Endothelial cell of umbilical vein (primary cell): ENCODE measurements at regions of chr13 and their contacts with region 1.

Region 1: GRCh38 chr13:89695343-89696257 is 1651.9 kb upstream of the MIR17HG start:
- DNase-seq: peak; percentile 68
- H3K4me3 ChIP-seq: no peak overlapping the region
- H3K27ac ChIP-seq: no peak overlapping the region
- H3K4me1 ChIP-seq: peaks cover 4% of the 10 kb centered on the region
- H3K27me3 ChIP-seq: no peaks in the 10 kb centered on the region
- CTCF ChIP-seq: peak; percentile 67 to 70
- POLR2A ChIP-seq: no peak

Region 2: DNA sequence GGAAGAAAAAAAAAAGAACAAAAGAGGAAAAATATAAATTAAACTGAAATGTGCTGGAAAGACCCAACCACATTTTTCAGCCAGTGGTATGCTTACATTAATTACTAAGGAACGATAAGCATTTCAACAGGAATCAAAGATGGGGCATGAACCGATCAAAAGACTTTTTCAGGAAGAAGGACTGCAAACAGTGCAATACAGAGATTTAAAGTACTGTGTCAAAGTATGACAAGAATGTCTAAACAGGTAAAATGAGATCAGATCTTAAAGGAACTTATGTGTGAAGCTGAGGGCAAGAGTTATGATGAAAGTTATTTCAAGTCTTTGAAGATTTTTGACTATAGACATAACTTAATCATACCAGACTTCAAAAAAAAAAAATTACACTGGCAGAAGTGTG is 262.6 kb before region 1 on chr13:
- CTCF ChIA-PET with region 1: interaction called, 91 read pairs
- POLR2A ChIA-PET with region 1: no interaction called
- dilution Hi-C with region 1: no loop called
- intact Hi-C with region 1: loop called (anchors 1 kb)
- DNase-seq: peak; percentile 26
- H3K4me3 ChIP-seq: no peak overlapping the region
- H3K27ac ChIP-seq: no peak overlapping the region
- H3K4me1 ChIP-seq: no peaks in the 10 kb centered on the region
- H3K27me3 ChIP-seq: no peaks in the 10 kb centered on the region
- CTCF ChIP-seq: no peak
- POLR2A ChIP-seq: no peak

Region 3: DNA sequence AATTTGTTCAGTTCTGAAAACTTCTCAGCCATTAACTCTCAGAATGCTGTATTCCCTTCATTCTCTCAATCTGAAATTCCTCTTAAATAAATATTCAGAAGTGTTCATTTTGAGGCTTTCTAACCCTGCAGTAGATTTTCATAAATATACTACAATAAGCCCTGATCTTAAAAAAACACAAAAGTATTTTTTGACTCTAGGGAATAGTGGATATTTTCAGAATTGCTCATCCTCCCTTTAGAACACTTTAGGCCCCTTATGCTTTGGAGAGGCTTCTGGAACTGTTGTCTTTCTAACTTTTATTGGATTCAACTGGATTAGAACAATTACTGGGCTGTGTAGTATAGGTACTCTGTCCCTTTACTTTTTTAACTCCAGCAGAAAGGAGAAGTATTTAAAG is 10.7 kb before region 1 on chr13:
- CTCF ChIA-PET with region 1: interaction called, 10 read pairs
- POLR2A ChIA-PET with region 1: no interaction called
- dilution Hi-C with region 1: no loop called
- intact Hi-C with region 1: no loop called
- DNase-seq: no peak
- H3K4me3 ChIP-seq: no peak overlapping the region
- H3K27ac ChIP-seq: no peak overlapping the region
- H3K4me1 ChIP-seq: no peaks in the 10 kb centered on the region
- H3K27me3 ChIP-seq: no peaks in the 10 kb centered on the region
- CTCF ChIP-seq: no peak
- POLR2A ChIP-seq: no peak

Region 4: GRCh38 chr13:89721216-89721615 is 25.6 kb after region 1 on chr13:
- CTCF ChIA-PET with region 1: no interaction called
- POLR2A ChIA-PET with region 1: no interaction called
- dilution Hi-C with region 1: no loop called
- intact Hi-C with region 1: no loop called
- DNase-seq: no peak
- H3K4me3 ChIP-seq: no peak overlapping the region
- H3K27ac ChIP-seq: no peak overlapping the region
- H3K4me1 ChIP-seq: no peaks in the 10 kb centered on the region
- H3K27me3 ChIP-seq: no peaks in the 10 kb centered on the region
- CTCF ChIP-seq: no peak
- POLR2A ChIP-seq: no peak

Region 5: DNA sequence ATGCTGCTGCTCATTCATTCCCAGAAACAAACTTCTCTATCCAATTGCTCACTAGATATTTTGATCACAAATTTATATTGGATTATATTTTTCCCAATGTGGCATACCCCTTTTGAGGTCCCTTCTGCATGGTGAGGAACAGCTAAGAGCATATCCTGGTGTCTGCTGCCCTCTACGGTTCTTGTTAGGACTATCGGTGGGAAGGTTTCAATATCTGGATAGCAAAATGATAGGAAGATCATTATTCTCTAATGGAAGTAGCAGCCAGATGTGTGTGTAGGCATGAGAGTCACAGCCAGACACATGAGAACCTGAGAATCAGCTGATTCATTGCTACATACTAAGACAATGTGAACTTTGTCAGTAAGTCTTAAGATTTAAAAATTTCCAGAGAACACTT is 229.5 kb after region 1 on chr13:
- CTCF ChIA-PET with region 1: interaction called, 13 read pairs
- POLR2A ChIA-PET with region 1: no interaction called
- dilution Hi-C with region 1: no loop called
- intact Hi-C with region 1: loop called (anchors 2 kb)
- DNase-seq: peak; percentile 56
- H3K4me3 ChIP-seq: no peak overlapping the region
- H3K27ac ChIP-seq: no peak overlapping the region
- H3K4me1 ChIP-seq: no peaks in the 10 kb centered on the region
- H3K27me3 ChIP-seq: no peaks in the 10 kb centered on the region
- CTCF ChIP-seq: peak; percentile 41 to 42
- POLR2A ChIP-seq: no peak